PC-3 (cell line): ENCODE measurements at regions of chr9 and their contacts with region 1.

Region 1: GRCh38 chr9:89135572-89135971 is 43.0 kb downstream of the SHC3 start:
- DNase-seq: no peak
- ATAC-seq: no peak
- H3K4me3 ChIP-seq: no peak overlapping the region
- H3K27ac ChIP-seq: no peak overlapping the region
- H3K4me1 ChIP-seq: peaks cover 29% of the 10 kb centered on the region
- H3K27me3 ChIP-seq: no peaks in the 10 kb centered on the region
- CTCF ChIP-seq: no peak

Region 2: DNA sequence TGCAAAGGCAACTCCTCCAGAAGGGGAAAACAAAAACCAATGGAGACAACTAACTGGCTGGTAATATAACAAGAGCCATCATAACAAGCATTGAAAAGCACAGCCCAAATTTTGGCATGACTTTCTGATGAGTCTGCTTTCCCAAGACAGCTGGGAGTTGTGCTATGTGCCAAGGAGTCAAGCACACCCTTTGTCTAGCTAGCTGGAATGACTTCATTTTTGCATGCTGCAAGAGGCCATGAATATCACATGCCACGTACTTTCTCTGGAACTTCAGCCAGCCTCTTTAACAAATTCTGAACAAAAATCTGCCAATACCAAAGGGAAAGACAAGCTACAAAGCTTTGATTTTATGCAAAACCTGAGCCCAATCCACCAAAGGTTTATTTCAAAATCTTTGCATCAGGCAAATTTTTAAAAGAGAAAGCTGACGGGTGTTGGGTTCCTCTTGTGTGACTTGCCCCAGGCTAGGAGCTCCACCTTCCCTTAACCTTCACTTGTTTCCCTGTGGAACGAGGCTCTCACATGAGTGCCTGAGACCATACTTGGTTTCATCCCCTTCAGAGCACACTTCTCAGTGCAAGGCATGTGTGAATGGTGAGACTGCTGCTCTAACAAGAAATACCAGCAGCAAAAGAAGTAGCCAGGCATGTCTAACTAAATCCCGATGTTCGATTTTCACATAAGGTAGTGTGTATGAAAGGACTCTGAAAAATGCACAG is 97.0 kb before region 1 on chr9:
- CTCF ChIA-PET with region 1: no interaction called
- POLR2A ChIA-PET with region 1: interaction called, 10 read pairs
- intact Hi-C with region 1: no loop called
- DNase-seq: peak; percentile 12
- ATAC-seq: no peak
- H3K4me3 ChIP-seq: no peak overlapping the region
- H3K27ac ChIP-seq: no peak overlapping the region
- H3K4me1 ChIP-seq: no peaks in the 10 kb centered on the region
- H3K27me3 ChIP-seq: no peaks in the 10 kb centered on the region
- CTCF ChIP-seq: no peak

Region 3: GRCh38 chr9:89821104-89821480 is 685.5 kb after region 1 on chr9:
- CTCF ChIA-PET with region 1: no interaction called
- POLR2A ChIA-PET with region 1: no interaction called
- intact Hi-C with region 1: no loop called
- DNase-seq: no peak
- ATAC-seq: no peak
- H3K4me3 ChIP-seq: no peak overlapping the region
- H3K27ac ChIP-seq: no peak overlapping the region
- H3K4me1 ChIP-seq: no peaks in the 10 kb centered on the region
- H3K27me3 ChIP-seq: peaks cover 10% of the 10 kb centered on the region
- CTCF ChIP-seq: no peak